Naive thymus-derived CD4-positive, alpha-beta T cell (primary cell): ENCODE measurements at regions of chr10 and their contacts with region 1.

Region 1: GRCh38 chr10:67612577-67613537 is 83.1 kb downstream of the CTNNA3 start:
- DNase-seq: peak in 8 of 9 donors; percentile 53 to 82 (median 73)
- ATAC-seq: peak; percentile 97
- H3K4me3 ChIP-seq: peak overlapping the region; percentile 36
- H3K4me3 Mint-ChIP-seq: peak overlapping the region; percentile 64 to 83 (median 75)
- H3K27ac ChIP-seq: no peak overlapping the region
- H3K27ac Mint-ChIP-seq: peak overlapping the region; percentile 8 to 88 (median 79)
- H3K4me1 ChIP-seq: peaks cover 17 to 24% of the 10 kb centered on the region in 2 donors
- H3K4me1 Mint-ChIP-seq: peaks cover 23 to 44% (median 33%) of the 10 kb centered on the region in 7 donors
- H3K27me3 ChIP-seq: no peaks in the 10 kb centered on the region
- H3K27me3 Mint-ChIP-seq: peaks cover 0 to 29% (median 0%) of the 10 kb centered on the region in 5 donors

Region 2: DNA sequence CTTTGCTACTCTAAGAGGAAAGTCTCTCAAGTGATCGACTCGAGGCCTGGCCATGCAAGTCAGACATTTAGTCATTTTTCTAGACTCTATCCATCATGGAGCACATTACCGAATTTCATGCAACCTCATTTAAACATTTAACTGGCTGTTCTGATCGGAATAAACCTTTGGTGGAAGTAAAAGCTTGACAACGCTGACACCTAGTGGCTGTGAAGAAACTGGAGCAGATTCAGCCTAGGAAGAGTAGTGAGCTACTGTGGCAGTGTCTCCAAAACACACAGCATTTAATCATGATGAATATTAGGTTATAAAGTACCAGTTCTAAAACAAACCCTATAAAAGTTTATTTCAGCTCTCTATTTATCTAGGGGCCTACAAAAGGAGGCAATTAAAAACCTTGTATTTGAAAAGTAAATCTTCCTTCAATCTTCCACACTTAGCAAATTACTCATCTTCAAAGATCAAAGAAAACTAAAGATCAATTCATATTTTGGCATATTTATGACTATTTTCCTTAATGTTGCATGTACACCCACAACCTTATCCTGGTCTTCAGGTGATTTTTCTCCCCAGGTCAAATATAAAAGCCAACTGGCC is 91.8 kb before region 1 on chr10:
- CTCF ChIA-PET with region 1: no interaction called
- POLR2A ChIA-PET with region 1: no interaction called
- intact Hi-C with region 1: loop called in 1 of 2 experiments (anchors 5 kb)
- DNase-seq: peak in 7 of 9 donors; percentile 10 to 46 (median 26)
- ATAC-seq: peak; percentile 74
- H3K4me3 ChIP-seq: no peak overlapping the region
- H3K4me3 Mint-ChIP-seq: no peak overlapping the region
- H3K27ac ChIP-seq: no peak overlapping the region
- H3K27ac Mint-ChIP-seq: no peak overlapping the region
- H3K4me1 ChIP-seq: no peaks in the 10 kb centered on the region
- H3K4me1 Mint-ChIP-seq: peaks cover 0 to 10% (median 3%) of the 10 kb centered on the region in 7 donors
- H3K27me3 ChIP-seq: no peaks in the 10 kb centered on the region
- H3K27me3 Mint-ChIP-seq: peaks cover 0 to 14% (median 4%) of the 10 kb centered on the region in 5 donors

Region 3: DNA sequence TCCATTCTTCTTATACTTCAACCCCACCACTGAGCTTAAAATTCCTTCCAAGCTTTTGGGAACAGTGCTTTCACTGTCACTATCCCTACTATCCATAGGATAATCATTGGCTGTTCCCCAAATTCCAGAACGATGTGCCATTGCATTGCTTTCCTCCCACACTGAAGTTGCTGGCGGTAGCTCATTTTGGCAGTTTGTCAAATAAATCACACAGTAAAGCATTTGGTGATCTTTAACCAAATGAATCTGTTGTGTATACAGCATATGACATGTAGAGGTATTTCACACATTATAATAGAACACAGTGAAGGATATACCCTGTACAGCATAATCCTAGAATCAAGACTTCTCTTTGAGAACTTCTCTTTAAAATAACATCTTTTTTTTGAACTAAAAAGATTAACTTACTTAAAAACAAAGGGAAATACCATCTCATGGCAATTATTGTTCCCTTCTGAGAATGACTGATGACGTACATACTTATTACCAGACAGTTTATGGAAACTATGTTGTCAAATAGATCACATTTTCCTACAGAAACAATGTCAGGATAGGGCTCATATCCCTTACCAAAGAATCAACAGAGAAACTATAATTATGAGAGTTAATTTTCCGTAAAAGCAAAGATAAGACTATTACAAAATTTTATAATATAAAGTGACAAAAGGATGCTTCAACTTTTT is 10.4 kb before region 1 on chr10:
- CTCF ChIA-PET with region 1: no interaction called
- POLR2A ChIA-PET with region 1: no interaction called
- intact Hi-C with region 1: no loop called
- DNase-seq: no peak
- ATAC-seq: no peak
- H3K4me3 ChIP-seq: no peak overlapping the region
- H3K4me3 Mint-ChIP-seq: no peak overlapping the region
- H3K27ac ChIP-seq: no peak overlapping the region
- H3K27ac Mint-ChIP-seq: no peak overlapping the region
- H3K4me1 ChIP-seq: no peaks in the 10 kb centered on the region
- H3K4me1 Mint-ChIP-seq: peaks cover 0 to 7% (median 0%) of the 10 kb centered on the region in 7 donors
- H3K27me3 ChIP-seq: no peaks in the 10 kb centered on the region
- H3K27me3 Mint-ChIP-seq: peaks cover 3 to 13% (median 7%) of the 10 kb centered on the region in 5 donors

Region 4: GRCh38 chr10:67666416-67667034 is 53.7 kb after region 1 on chr10:
- CTCF ChIA-PET with region 1: no interaction called
- POLR2A ChIA-PET with region 1: no interaction called
- intact Hi-C with region 1: loop called in 1 of 2 experiments (anchors 5 kb)
- DNase-seq: peak in 5 of 9 donors; percentile 8 to 21 (median 17)
- ATAC-seq: no peak
- H3K4me3 ChIP-seq: no peak overlapping the region
- H3K4me3 Mint-ChIP-seq: no peak overlapping the region
- H3K27ac ChIP-seq: no peak overlapping the region
- H3K27ac Mint-ChIP-seq: no peak overlapping the region
- H3K4me1 ChIP-seq: no peaks in the 10 kb centered on the region
- H3K4me1 Mint-ChIP-seq: no peaks in the 10 kb centered on the region
- H3K27me3 ChIP-seq: no peaks in the 10 kb centered on the region
- H3K27me3 Mint-ChIP-seq: peaks cover 0 to 32% (median 0%) of the 10 kb centered on the region in 5 donors

Region 5: GRCh38 chr10:67884313-67884841 is 271.5 kb after region 1 on chr10 and contains the start of gene SIRT1:
- CTCF ChIA-PET with region 1: no interaction called
- POLR2A ChIA-PET with region 1: no interaction called
- intact Hi-C with region 1: loop called in 1 of 2 experiments (anchors 1 kb)
- DNase-seq: peak; percentile 87 to 95 (median 90)
- ATAC-seq: peak; percentile 89
- H3K4me3 ChIP-seq: peak within 1 kb of the TSS; percentile 75
- H3K4me3 Mint-ChIP-seq: peak within 1 kb of the TSS; percentile 86 to 98 (median 95)
- H3K27ac ChIP-seq: peak within 1 kb of the TSS; percentile 83
- H3K27ac Mint-ChIP-seq: peak within 1 kb of the TSS; percentile 90 to 98 (median 95)
- H3K4me1 ChIP-seq: peaks cover 12 to 16% of the 10 kb centered on the region in 2 donors
- H3K4me1 Mint-ChIP-seq: peaks cover 27 to 43% (median 35%) of the 10 kb centered on the region in 7 donors
- H3K27me3 ChIP-seq: no peaks in the 10 kb centered on the region
- H3K27me3 Mint-ChIP-seq: peaks cover 0 to 5% (median 0%) of the 10 kb centered on the region in 5 donors
- total RNA-seq, gene SIRT1: 25.9 to 66.8 (median 59.5) TPM

Region 6: DNA sequence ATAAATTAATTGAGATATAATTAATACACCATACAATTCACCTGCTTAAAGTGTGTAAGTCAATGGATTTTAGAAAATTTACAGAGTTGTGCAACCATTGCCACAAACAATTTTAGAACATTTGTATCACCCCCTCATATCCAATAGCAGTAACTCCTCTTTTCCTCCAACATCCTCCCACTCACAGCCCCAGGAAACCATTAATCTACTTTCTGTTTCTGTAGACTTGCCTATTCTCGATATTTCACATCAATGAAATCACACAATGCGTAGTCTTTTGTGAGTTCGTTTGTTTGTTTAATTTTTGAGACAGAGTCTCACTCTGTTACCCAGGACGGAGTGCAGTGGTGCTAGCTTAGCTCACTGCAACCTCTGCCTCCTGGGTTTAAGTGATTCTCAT is 475.9 kb after region 1 on chr10:
- CTCF ChIA-PET with region 1: no interaction called
- POLR2A ChIA-PET with region 1: no interaction called
- intact Hi-C with region 1: loop called in 1 of 2 experiments (anchors 5 kb)
- DNase-seq: no peak
- ATAC-seq: no peak
- H3K4me3 ChIP-seq: no peak overlapping the region
- H3K4me3 Mint-ChIP-seq: peak overlapping the region in 1 of 10 donors; percentile 16
- H3K27ac ChIP-seq: no peak overlapping the region
- H3K27ac Mint-ChIP-seq: no peak overlapping the region
- H3K4me1 ChIP-seq: no peaks in the 10 kb centered on the region
- H3K4me1 Mint-ChIP-seq: peaks cover 0 to 17% (median 4%) of the 10 kb centered on the region in 7 donors
- H3K27me3 ChIP-seq: no peaks in the 10 kb centered on the region
- H3K27me3 Mint-ChIP-seq: peaks cover 0 to 4% (median 3%) of the 10 kb centered on the region in 5 donors

Region 7: DNA sequence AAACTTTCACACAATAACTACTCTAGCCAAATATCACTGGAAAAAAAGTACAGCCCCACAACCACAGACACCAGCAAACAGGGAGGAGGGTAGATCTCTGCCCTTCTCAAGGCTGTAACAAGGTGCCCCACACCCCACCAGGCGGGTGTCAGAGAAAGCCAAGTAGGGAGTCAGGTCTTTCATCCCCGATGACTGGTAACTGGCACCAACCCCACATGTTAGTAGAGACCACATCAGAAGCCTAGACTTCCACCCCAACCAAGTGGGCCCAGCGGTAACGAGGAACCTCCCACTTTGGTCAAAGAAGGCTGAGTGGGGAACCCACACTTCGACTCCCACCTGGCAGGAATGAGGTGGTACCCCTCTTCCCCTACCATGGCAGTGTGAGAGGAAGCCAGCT is 810.7 kb after region 1 on chr10:
- CTCF ChIA-PET with region 1: no interaction called
- POLR2A ChIA-PET with region 1: no interaction called
- intact Hi-C with region 1: no loop called
- DNase-seq: peak in 8 of 9 donors; percentile 2 to 39 (median 26)
- ATAC-seq: peak; percentile 76
- H3K4me3 ChIP-seq: no peak overlapping the region
- H3K4me3 Mint-ChIP-seq: peak overlapping the region; percentile 14 to 73 (median 54)
- H3K27ac ChIP-seq: no peak overlapping the region
- H3K27ac Mint-ChIP-seq: peak overlapping the region; percentile 17 to 91 (median 59)
- H3K4me1 ChIP-seq: peaks cover 4 to 6% of the 10 kb centered on the region in 2 donors
- H3K4me1 Mint-ChIP-seq: peaks cover under 1 to 24% (median 11%) of the 10 kb centered on the region in 7 donors
- H3K27me3 ChIP-seq: no peaks in the 10 kb centered on the region
- H3K27me3 Mint-ChIP-seq: no peaks in the 10 kb centered on the region